ENCODE measurements at regions of chr4 and their contacts with region 1.

Region 1: GRCh38 chr4:8607603-8608481 is 15.3 kb downstream of the CPZ start:
- DNase-seq: peak; percentile 66
- ATAC-seq: no peak
- H3K4me3 Mint-ChIP-seq: no peak overlapping the region
- H3K27ac Mint-ChIP-seq: no peak overlapping the region
- H3K4me1 Mint-ChIP-seq: no peaks in the 10 kb centered on the region
- H3K27me3 Mint-ChIP-seq: peaks cover 4% of the 10 kb centered on the region

Region 2: GRCh38 chr4:8383451-8384160 is 224.2 kb before region 1 on chr4:
- CTCF ChIA-PET with region 1: no interaction called
- POLR2A ChIA-PET with region 1: no interaction called
- intact Hi-C with region 1: no loop called
- DNase-seq: no peak
- ATAC-seq: no peak
- H3K4me3 Mint-ChIP-seq: no peak overlapping the region
- H3K27ac Mint-ChIP-seq: no peak overlapping the region
- H3K4me1 Mint-ChIP-seq: no peaks in the 10 kb centered on the region
- H3K27me3 Mint-ChIP-seq: no peaks in the 10 kb centered on the region

Region 3: DNA sequence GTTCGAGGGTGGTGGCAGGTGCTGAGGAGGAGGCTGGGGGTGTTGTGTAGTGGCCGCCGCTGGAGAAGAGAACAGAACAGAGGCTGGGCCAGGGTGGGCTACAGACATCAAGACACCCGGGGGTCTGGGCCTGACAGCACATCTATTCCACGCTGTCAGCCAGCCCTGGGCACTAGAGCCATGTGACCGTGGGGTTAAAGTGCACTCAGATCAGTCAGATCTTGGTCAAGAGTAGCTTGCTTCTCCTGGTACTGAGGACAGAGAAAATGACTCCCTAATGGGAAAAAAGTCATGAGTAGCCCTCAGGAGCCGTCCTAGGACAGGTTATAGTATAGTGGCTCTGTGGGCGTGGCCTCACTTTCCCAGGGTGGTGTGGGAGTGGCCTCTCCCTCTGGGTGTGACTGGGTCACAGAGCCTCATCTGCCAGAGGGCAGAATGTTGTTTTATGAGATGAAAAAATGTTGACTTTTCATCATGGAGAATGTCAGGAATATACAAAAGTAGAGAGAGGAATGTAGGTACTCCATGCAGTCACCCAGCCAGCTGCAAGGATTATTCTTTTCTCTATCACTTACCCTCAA is 147.9 kb before region 1 on chr4:
- CTCF ChIA-PET with region 1: no interaction called
- POLR2A ChIA-PET with region 1: no interaction called
- intact Hi-C with region 1: no loop called
- DNase-seq: no peak
- ATAC-seq: no peak
- H3K4me3 Mint-ChIP-seq: no peak overlapping the region
- H3K27ac Mint-ChIP-seq: no peak overlapping the region
- H3K4me1 Mint-ChIP-seq: no peaks in the 10 kb centered on the region
- H3K27me3 Mint-ChIP-seq: no peaks in the 10 kb centered on the region

Region 4: GRCh38 chr4:8917868-8918783 is 310.3 kb after region 1 on chr4:
- CTCF ChIA-PET with region 1: interaction called, 6 read pairs
- POLR2A ChIA-PET with region 1: no interaction called
- intact Hi-C with region 1: loop called (anchors 1 to 10 kb)
- DNase-seq: peak; percentile 82
- ATAC-seq: peak; percentile 77
- H3K4me3 Mint-ChIP-seq: no peak overlapping the region
- H3K27ac Mint-ChIP-seq: no peak overlapping the region
- H3K4me1 Mint-ChIP-seq: no peaks in the 10 kb centered on the region
- H3K27me3 Mint-ChIP-seq: peaks cover 6% of the 10 kb centered on the region